Motor neuron (in vitro differentiated cells): ENCODE measurements at regions of chr11 and their contacts with region 1.

Region 1: GRCh38 chr11:12269104-12269441 is 108.3 kb upstream of the PARVA start:
- ATAC-seq: peak in 5 of 8 experiments; percentile 12 to 61 (median 33)
- H3K4me3 ChIP-seq: no peak overlapping the region
- H3K27ac ChIP-seq: no peak overlapping the region
- H3K4me1 ChIP-seq: peaks cover 0 to 9% of the 10 kb centered on the region in 2 donors

Region 2: DNA sequence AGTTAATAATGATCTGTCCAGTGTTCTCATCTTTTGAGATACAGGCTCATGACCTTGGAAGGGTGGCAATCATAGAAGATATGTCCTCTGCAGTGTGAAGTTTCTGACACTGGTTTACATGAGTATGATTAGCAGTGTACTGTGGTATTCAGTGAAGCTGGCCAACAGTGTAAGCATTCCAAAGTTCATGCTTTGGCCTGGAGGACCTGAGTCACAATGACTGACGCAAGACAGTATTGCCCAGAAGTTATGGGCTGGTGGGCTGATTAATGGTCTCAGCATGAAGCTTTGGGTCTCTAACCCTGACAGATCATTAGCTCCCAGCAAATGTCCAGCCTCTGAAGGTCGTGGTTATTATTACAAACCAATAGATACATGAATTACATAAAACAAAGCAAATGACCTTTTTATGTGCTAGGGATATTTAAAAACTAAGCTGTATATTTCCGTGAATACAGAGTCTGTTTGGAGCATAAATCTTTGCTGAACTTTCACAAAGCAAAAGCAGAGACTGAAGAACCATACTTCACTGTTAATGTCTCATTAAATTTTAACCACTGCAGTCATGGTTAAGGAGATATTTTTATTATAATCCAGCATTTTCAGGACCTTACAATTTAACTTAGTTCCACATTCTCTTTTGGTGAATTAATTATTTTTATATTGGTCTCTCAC is 455.6 kb before region 1 on chr11:
- in situ Hi-C with region 1: loop called in 1 of 9 experiments (anchors 25 kb)
- ATAC-seq: peak in 3 of 8 experiments; percentile 45 to 100 (median 98)
- H3K4me3 ChIP-seq: no peak overlapping the region
- H3K27ac ChIP-seq: no peak overlapping the region
- H3K4me1 ChIP-seq: no peaks in the 10 kb centered on the region

Region 3: DNA sequence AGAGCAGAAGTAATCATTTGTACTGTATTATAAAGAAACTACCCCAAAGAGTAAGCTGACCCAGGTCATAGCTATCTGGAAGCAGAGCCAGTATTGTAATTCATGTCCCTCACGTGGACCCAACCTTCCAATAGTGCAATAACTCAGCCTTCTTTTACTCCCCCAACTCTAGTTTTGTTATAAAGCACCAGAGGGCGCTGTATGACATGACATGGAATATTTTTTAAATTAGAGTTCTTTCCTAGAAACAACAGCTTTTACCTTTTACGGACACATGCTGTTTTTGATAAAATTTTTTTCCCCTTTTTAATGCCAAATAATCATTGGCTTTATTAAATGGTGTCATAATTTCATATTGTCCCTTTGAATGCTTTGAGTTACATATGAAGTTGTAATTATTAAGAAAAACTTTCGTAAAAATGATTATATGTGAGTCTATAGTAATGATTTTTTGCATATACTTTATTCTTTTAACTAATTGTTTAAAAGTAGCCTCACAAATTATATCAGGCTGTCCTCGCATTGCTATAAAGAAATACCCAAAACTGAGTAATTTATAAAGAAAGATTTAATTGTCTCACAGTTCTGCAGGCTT is 337.5 kb before region 1 on chr11:
- in situ Hi-C with region 1: loop called in 1 of 9 experiments (anchors 25 kb)
- ATAC-seq: peak in 5 of 8 experiments; percentile 43 to 88 (median 72)
- H3K4me3 ChIP-seq: no peak overlapping the region
- H3K27ac ChIP-seq: no peak overlapping the region
- H3K4me1 ChIP-seq: no peaks in the 10 kb centered on the region